ENCODE measurements at regions of chr5 and their contacts with region 1.

Region 1: DNA sequence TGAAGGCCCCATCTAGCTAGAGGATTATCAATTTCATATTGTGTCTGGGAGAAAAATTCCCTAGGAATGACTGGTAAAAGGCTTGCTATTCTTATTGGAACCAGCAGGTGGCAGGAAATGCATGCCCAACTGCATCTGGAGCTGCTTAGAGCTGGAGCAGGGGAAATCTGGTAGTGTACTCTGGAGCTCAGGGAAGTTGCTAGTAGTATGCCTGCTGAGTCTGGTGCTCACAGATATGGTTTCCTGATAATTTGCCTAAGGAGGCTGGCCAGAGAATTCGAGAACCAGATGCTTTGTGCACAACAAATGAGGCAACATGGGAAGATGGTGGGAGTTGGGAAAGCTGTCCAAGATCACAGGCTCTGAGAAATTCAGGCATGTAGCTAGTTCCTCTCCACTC is 53.7 kb downstream of the G3BP1 start:
- DNase-seq: peak; percentile 77
- H3K27ac ChIP-seq: no peak overlapping the region
- CTCF ChIP-seq: peak; percentile 88

Region 2: DNA sequence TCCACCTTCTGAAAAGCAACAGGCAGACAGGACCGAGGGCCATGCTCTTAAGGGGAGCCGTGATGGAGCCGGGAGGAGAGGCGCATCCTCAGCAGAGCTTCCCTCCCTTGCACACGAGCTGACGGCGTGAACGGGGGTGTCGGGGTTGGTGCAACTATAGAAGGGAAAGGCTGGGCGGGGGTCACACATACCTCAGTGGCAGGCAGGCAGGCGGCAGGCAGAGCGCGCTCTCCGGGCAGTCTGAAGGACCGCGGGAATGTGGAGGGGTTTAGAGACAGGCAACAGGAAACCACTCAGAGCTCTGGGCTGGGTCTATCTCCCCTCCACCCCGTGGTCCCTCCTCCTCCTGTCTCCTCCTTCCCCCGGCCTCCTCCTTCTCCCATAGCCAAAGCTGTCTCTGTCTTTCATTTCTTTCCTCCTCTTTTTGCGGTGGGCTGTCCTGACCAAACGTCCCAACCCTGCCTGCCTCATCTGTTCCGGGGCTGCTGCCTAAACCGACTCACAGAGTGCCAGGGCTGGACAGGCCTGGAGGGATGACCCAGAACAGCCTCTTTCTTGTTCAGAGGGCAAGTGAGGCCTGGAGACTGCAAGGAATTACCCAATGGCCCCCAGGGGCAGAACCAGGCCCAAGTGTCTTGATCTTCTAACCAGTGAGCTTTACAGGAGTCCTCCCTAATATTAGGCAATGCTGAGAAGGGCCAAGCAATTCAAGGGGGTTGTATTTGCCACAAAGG is 138.6 kb before region 1 on chr5 and contains the start of gene SPARC:
- CTCF ChIA-PET with region 1: no interaction called
- POLR2A ChIA-PET with region 1: no interaction called
- DNase-seq: peak; percentile 47
- H3K27ac ChIP-seq: peak within 1 kb of the TSS; percentile 89
- CTCF ChIP-seq: no peak

Region 3: DNA sequence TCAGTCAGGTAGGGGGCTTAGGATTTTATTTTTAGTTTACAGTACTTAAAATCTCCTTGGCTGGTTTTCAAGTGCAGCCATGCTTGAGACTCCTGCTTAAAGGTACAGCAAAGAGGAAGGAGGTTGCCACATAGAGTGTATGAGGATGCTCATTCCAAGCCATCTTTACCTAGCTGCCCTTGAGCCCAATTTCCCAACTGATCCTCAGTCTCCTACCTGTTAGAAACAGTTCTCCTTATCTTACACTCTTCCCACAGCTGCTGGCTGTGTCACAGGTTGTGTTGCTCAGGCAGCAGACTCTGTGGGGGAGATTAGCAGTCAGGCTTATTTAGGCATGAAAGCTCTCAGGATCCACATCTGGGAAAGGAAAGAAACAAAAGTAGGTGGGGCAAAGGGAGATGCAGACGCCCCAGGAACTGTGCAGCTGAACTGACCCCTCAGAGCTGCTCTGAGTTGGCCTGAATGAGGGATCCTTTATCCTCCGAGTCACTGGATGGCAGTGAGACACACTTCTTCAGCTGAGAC is 484.5 kb after region 1 on chr5:
- CTCF ChIA-PET with region 1: no interaction called
- POLR2A ChIA-PET with region 1: no interaction called
- DNase-seq: no peak
- H3K27ac ChIP-seq: no peak overlapping the region
- CTCF ChIP-seq: no peak

Region 4: GRCh38 chr5:152349683-152350526 is 524.5 kb after region 1 on chr5:
- CTCF ChIA-PET with region 1: interaction called, 15 read pairs
- POLR2A ChIA-PET with region 1: no interaction called
- DNase-seq: peak; percentile 49
- H3K27ac ChIP-seq: no peak overlapping the region
- CTCF ChIP-seq: peak; percentile 88

Measured in RWPE1 (cell line).